Caco-2 (cell line): ENCODE measurements at regions of chr2 and their contacts with region 1.

Region 1: GRCh38 chr2:86079981-86080911 is 25.4 kb downstream of the POLR1A start:
- DNase-seq: peak; percentile 82 to 85
- H3K4me3 ChIP-seq: no peak overlapping the region
- H3K4me3 Mint-ChIP-seq: no peak overlapping the region
- H3K27ac Mint-ChIP-seq: no peak overlapping the region
- H3K4me1 ChIP-seq: no peaks in the 10 kb centered on the region; the same call in 1 of the 2 replicates
- H3K4me1 Mint-ChIP-seq: no peaks in the 10 kb centered on the region
- H3K27me3 ChIP-seq: no peaks in the 10 kb centered on the region
- H3K27me3 Mint-ChIP-seq: no peaks in the 10 kb centered on the region
- CTCF ChIP-seq: peak; percentile 61 to 90

Region 2: DNA sequence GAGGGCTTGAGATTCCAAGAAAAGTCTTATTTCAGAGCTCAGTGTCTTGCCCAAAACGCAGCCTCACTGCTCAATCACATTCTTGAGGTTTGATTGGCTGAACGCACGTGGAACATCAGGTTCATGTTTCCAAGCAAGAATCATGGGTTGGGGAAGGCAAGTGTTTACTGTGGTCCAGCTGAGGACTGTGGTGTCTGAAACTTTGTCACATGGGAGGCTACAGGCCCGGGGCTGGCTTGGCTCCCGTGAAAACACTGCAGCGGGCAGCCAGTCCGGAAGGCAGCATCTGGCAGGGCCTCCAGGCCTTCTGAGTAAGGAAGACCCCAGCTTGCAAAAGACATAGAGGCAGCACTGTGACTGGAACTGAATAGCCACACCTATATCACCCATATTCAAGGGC is 59.3 kb before region 1 on chr2:
- CTCF ChIA-PET with region 1: no interaction called
- POLR2A ChIA-PET with region 1: no interaction called
- intact Hi-C with region 1: loop called (anchors 5 kb)
- DNase-seq: no peak
- H3K4me3 ChIP-seq: no peak overlapping the region
- H3K4me3 Mint-ChIP-seq: no peak overlapping the region
- H3K27ac Mint-ChIP-seq: no peak overlapping the region
- H3K4me1 ChIP-seq: peaks cover 7% of the 10 kb centered on the region; the same call in 1 of the 2 replicates
- H3K4me1 Mint-ChIP-seq: peaks cover 7% of the 10 kb centered on the region
- H3K27me3 ChIP-seq: no peaks in the 10 kb centered on the region
- H3K27me3 Mint-ChIP-seq: no peaks in the 10 kb centered on the region
- CTCF ChIP-seq: no peak